A673 (cell line): ENCODE measurements at regions of chr5 and their contacts with region 1.

Region 1: GRCh38 chr5:150120561-150121460 is 34.5 kb upstream of the CSF1R start:
- DNase-seq: no peak
- H3K4me3 ChIP-seq: no peak overlapping the region
- H3K27ac ChIP-seq: no peak overlapping the region
- H3K4me1 ChIP-seq: no peaks in the 10 kb centered on the region
- H3K27me3 ChIP-seq: no peaks in the 10 kb centered on the region
- CTCF ChIP-seq: no peak

Region 2: DNA sequence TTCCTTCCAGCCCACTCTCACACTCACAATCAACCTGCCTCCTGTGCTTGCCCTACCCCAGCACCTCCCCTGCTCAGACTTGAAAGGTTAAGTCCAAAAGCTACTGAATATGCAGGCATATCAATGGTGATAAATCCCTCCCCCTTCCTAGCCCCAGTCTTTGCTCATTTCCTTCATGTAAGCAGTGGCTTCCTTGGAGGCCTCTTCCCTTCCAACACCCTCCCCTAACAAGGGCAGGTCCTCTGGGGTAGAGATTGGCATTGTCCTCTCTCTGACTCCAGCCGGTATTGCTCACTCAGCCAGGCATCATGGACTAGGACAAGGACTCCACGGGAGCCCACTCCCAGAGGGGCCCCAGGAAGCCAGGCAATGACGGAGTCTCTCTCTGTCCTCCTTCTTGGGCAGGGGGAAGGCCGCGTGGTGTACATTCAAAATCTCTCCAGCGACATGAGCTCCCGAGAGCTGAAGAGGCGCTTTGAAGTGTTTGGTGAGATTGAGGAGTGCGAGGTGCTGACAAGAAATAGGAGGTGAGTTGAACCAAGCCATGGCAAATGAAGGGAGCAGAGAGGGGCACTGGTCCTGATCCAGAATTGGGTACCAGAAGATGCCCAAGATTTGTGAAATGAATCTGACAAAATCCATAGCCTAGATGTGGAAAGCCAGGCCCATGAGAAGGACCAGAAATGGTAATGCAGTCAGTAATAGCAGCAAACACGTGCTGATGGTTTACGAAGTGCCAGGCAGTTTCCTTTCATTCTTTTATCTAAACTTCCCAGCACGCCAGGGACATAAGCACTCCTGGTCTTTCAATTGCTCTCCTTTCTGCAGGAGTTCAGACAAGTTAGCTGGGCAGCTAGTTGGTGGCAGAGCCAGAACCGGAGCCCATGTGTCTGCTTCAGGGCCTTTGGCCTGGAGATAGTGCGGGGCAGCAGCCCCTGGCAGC is 278.7 kb before region 1 on chr5:
- CTCF ChIA-PET with region 1: interaction called, 12 read pairs
- POLR2A ChIA-PET with region 1: no interaction called
- intact Hi-C with region 1: loop called (anchors 10 kb)
- DNase-seq: no peak
- H3K4me3 ChIP-seq: peak overlapping the region; percentile 40
- H3K27ac ChIP-seq: peak overlapping the region; percentile 91
- H3K4me1 ChIP-seq: peaks cover 52% of the 10 kb centered on the region
- H3K27me3 ChIP-seq: no peaks in the 10 kb centered on the region
- CTCF ChIP-seq: no peak

Region 3: DNA sequence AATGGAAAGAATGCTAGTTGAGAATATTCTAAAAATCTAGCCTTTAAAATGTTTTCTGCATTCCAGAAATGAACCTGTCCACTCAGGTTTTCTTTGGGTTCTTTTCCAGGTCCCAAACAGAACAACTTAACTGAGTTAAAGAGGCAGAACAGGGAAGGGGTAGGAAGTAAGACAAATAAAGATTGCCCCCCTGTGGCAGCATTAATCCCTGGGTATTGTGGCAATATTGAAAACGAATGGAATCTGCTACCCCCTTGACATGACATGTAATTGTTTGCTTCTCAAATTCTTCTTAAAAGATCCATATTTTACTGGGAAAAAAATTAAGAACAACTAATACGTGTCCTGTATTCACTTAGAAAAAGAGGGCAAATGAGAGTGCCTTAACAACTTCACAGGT is 589.4 kb after region 1 on chr5:
- CTCF ChIA-PET with region 1: no interaction called
- POLR2A ChIA-PET with region 1: no interaction called
- intact Hi-C with region 1: no loop called
- DNase-seq: peak; percentile 18
- H3K4me3 ChIP-seq: no peak overlapping the region
- H3K27ac ChIP-seq: no peak overlapping the region
- H3K4me1 ChIP-seq: no peaks in the 10 kb centered on the region
- H3K27me3 ChIP-seq: no peaks in the 10 kb centered on the region
- CTCF ChIP-seq: peak; percentile 33; the same call in 1 of the 2 replicates